ENCODE measurements at regions of chr7 and their contacts with region 1.

Region 1: DNA sequence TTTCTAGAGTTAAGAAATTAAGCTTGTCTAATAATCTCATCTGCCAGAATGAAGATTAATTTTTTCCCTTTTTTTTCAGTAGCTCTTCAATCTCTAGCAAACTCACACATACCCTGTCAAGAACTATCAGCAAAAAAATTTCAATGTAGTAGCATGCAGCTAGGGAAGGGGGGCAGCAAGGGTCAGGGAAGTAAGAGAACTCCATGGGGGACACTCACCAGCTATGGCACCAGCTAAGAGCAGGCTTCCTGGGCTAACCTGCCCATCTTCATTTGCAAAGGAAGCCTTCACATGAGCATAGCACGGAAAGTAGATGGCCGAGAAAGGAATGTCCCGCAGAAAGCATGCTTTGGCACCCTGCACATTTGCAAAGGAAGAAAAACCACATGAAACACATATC is 190.4 kb downstream of the SLC25A13 start:
- DNase-seq: no peak
- H3K4me3 ChIP-seq: no peak overlapping the region
- H3K4me3 Mint-ChIP-seq: no peak overlapping the region
- H3K27ac ChIP-seq: no peak overlapping the region
- H3K27ac Mint-ChIP-seq: peak overlapping the region in 2 of 7 donors; percentile 48 to 56
- H3K4me1 ChIP-seq: no peaks in the 10 kb centered on the region
- H3K4me1 Mint-ChIP-seq: peaks cover 0 to 2% (median 0%) of the 10 kb centered on the region in 4 donors
- H3K27me3 ChIP-seq: no peaks in the 10 kb centered on the region
- H3K27me3 Mint-ChIP-seq: no peaks in the 10 kb centered on the region

Region 2: DNA sequence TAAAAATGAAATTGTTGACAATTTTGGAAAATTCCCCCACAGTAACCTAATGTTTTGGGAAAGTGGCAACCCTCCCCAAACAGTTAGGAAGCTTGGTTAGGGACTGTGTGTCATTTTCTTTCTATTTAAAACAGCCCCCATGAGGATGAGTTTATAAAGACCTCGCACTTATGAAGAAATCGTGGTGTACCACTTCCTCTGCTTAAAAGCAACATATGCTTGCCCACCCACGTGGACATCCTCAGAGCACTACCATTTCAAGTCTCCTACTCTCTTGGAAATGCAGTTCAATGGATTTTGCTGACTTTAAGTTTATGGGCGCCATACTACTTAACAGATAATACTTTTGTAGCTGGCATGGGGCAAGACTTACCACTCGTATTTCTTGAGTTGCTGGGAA is 135.4 kb before region 1 on chr7:
- CTCF ChIA-PET with region 1: no interaction called
- POLR2A ChIA-PET with region 1: no interaction called
- intact Hi-C with region 1: loop called (anchors 2 kb)
- DNase-seq: no peak
- H3K4me3 ChIP-seq: no peak overlapping the region
- H3K4me3 Mint-ChIP-seq: no peak overlapping the region
- H3K27ac ChIP-seq: no peak overlapping the region
- H3K27ac Mint-ChIP-seq: no peak overlapping the region
- H3K4me1 ChIP-seq: no peaks in the 10 kb centered on the region
- H3K4me1 Mint-ChIP-seq: no peaks in the 10 kb centered on the region
- H3K27me3 ChIP-seq: no peaks in the 10 kb centered on the region
- H3K27me3 Mint-ChIP-seq: peaks cover 2% of the 10 kb centered on the region in 2 donors

Region 3: DNA sequence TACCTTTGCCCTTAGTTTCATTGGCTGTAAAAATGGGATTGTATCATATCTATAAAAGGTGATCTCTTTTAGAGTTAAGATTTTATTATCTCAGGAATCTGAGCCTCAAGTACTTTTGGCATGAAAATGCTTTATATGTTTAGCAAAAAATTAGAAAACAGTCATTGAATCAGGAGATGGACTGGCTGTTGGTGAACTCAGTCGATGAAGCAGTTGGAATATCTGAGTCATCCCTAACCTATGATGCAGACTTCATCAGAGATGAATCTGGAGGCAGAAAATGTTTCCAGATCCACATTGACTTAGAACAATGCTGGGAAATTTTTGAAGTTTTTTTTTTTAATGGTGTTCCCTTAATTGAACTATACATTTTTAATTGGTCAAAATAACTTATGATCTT is 38.1 kb before region 1 on chr7:
- CTCF ChIA-PET with region 1: no interaction called
- POLR2A ChIA-PET with region 1: no interaction called
- intact Hi-C with region 1: no loop called
- DNase-seq: no peak
- H3K4me3 ChIP-seq: no peak overlapping the region
- H3K4me3 Mint-ChIP-seq: no peak overlapping the region
- H3K27ac ChIP-seq: no peak overlapping the region
- H3K27ac Mint-ChIP-seq: no peak overlapping the region
- H3K4me1 ChIP-seq: no peaks in the 10 kb centered on the region
- H3K4me1 Mint-ChIP-seq: no peaks in the 10 kb centered on the region
- H3K27me3 ChIP-seq: no peaks in the 10 kb centered on the region
- H3K27me3 Mint-ChIP-seq: peaks cover 7 to 11% of the 10 kb centered on the region in 2 donors

Region 4: GRCh38 chr7:96151889-96152288 is 20.4 kb after region 1 on chr7:
- CTCF ChIA-PET with region 1: no interaction called
- POLR2A ChIA-PET with region 1: no interaction called
- intact Hi-C with region 1: no loop called
- DNase-seq: no peak
- H3K4me3 ChIP-seq: no peak overlapping the region
- H3K4me3 Mint-ChIP-seq: no peak overlapping the region
- H3K27ac ChIP-seq: no peak overlapping the region
- H3K27ac Mint-ChIP-seq: no peak overlapping the region
- H3K4me1 ChIP-seq: no peaks in the 10 kb centered on the region
- H3K4me1 Mint-ChIP-seq: no peaks in the 10 kb centered on the region
- H3K27me3 ChIP-seq: no peaks in the 10 kb centered on the region
- H3K27me3 Mint-ChIP-seq: no peaks in the 10 kb centered on the region

Measured in CD4-positive, alpha-beta memory T cell (primary cell).